Tibial artery (tissue), 4 donors: ENCODE measurements at regions of chr9 and their contacts with region 1.

Region 1: GRCh38 chr9:92342825-92343488 is 17.2 kb downstream of the CENPP start:
- DNase-seq: no peak
- H3K4me3 ChIP-seq: no peak overlapping the region
- H3K27ac ChIP-seq: peak overlapping the region; percentile 54 to 66
- H3K4me1 ChIP-seq: peaks cover 0 to 14% (median 3%) of the 10 kb centered on the region in 4 donors
- H3K27me3 ChIP-seq: no peaks in the 10 kb centered on the region
- CTCF ChIP-seq: peak; percentile 36 to 57

Region 2: GRCh38 chr9:91727316-91727861 is 615.6 kb before region 1 on chr9:
- intact Hi-C with region 1: no loop called
- DNase-seq: no peak
- H3K4me3 ChIP-seq: no peak overlapping the region
- H3K27ac ChIP-seq: no peak overlapping the region
- H3K4me1 ChIP-seq: no peaks in the 10 kb centered on the region
- H3K27me3 ChIP-seq: peaks cover 0 to 3% of the 10 kb centered on the region in 2 donors
- CTCF ChIP-seq: peak; percentile 43 to 53

Region 3: DNA sequence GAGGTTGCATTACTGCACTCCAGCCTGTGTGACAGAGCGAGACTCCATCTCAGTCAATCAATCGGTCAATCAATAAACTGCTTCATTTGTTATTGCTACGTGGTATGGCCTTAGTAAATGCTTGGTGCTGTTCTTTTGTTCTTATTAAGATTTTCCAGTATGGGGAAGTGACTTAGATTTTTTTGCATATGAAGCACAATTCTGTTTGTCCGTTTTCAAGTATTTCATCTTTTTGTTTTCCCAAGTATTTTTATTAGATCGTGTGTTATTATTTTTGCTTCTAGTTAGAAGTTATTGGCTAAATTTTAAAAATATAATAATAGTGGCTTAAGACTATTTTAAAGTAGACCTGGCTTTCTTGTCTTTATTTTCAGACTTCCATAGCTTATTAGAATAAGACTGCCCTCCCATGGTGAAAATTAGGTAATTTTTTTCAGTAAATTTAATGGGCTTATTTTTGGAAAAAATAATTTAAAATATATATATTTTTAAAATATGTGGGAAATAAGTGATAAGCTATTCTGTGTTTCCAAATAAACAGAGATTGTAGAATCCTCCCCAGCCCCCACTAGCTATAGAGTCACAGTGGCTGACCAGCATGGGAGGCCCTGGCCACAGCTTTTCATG is 96.1 kb after region 1 on chr9:
- intact Hi-C with region 1: loop called (anchors 5 kb)
- DNase-seq: no peak
- H3K4me3 ChIP-seq: no peak overlapping the region
- H3K27ac ChIP-seq: peak overlapping the region in 1 of 2 donors; percentile 14
- H3K4me1 ChIP-seq: peaks cover 0 to 22% (median 3%) of the 10 kb centered on the region in 4 donors
- H3K27me3 ChIP-seq: no peaks in the 10 kb centered on the region
- CTCF ChIP-seq: peak in 1 of 2 experiments; percentile 39

Region 4: DNA sequence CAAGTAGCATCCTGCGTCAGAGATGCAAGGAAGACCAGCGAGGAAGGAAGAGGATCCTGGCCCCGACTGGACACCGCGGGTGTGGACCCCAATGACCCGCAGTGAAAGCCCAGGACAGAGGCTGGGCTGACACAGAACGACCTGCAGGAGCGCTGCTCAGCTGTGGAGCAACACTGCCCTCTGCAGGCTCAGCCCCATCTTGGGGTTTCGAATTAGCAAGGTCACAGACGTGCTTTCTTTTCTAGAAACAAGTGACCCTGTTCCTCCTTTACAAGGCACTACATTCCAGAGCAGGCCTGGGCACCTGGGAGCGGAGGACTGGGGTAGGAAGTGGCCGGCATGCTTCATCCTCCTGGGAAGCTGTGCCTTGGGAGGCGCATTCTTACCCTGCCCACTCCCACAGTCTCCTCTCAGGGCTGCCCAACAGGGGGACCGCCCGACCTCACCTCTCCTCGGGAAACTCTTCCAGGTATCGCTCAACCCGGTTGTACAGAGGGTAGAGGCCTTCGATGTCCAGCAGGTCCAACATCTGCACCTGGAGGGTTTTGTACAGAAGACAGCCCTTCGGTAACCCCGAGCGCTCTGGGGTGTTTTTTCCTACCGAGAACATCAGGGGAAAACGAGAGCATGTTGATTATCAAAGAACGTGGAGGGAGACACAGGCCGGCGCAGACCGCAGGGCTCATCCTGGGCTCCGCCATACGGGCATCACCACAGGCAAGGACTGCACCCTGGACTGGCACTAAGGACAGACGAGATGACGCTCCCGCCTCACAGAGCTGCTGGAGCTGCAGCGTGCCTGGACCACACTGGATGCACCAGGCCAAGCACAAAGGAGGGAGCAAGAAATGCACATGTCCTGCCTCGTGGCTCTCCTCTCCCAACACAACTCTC is 292.0 kb after region 1 on chr9:
- intact Hi-C with region 1: loop called (anchors 2 kb)
- DNase-seq: peak; percentile 72 to 86
- H3K4me3 ChIP-seq: no peak overlapping the region
- H3K27ac ChIP-seq: peak overlapping the region; percentile 36 to 67
- H3K4me1 ChIP-seq: peaks cover 0 to 35% (median 13%) of the 10 kb centered on the region in 4 donors
- H3K27me3 ChIP-seq: no peaks in the 10 kb centered on the region
- CTCF ChIP-seq: peak; percentile 96 to 98